CD4-positive, alpha-beta T cell (primary cell): ENCODE measurements at regions of chr12 and their contacts with region 1.

Region 1: GRCh38 chr12:107344035-107344808 is 250.9 kb upstream of the CRY1 start:
- DNase-seq: no peak
- ATAC-seq: no peak
- H3K4me3 ChIP-seq: no peak overlapping the region
- H3K4me3 Mint-ChIP-seq: no peak overlapping the region
- H3K27ac ChIP-seq: no peak overlapping the region
- H3K27ac Mint-ChIP-seq: no peak overlapping the region
- H3K4me1 ChIP-seq: peaks cover 16% of the 10 kb centered on the region
- H3K4me1 Mint-ChIP-seq: peaks cover 41% of the 10 kb centered on the region
- H3K27me3 ChIP-seq: no peaks in the 10 kb centered on the region
- H3K27me3 Mint-ChIP-seq: no peaks in the 10 kb centered on the region
- CTCF ChIP-seq: no peak

Region 2: GRCh38 chr12:107359342-107359741 is 15.1 kb after region 1 on chr12:
- CTCF ChIA-PET with region 1: no interaction called
- POLR2A ChIA-PET with region 1: no interaction called
- intact Hi-C with region 1: loop called in 1 of 2 experiments (anchors 2 kb)
- DNase-seq: no peak
- ATAC-seq: no peak
- H3K4me3 ChIP-seq: no peak overlapping the region
- H3K4me3 Mint-ChIP-seq: no peak overlapping the region
- H3K27ac ChIP-seq: no peak overlapping the region
- H3K27ac Mint-ChIP-seq: no peak overlapping the region
- H3K4me1 ChIP-seq: peaks cover 10% of the 10 kb centered on the region
- H3K4me1 Mint-ChIP-seq: peaks cover 25% of the 10 kb centered on the region
- H3K27me3 ChIP-seq: no peaks in the 10 kb centered on the region
- H3K27me3 Mint-ChIP-seq: no peaks in the 10 kb centered on the region
- CTCF ChIP-seq: no peak